PC-3 (cell line): ENCODE measurements at regions of chr11 and their contacts with region 1.

Region 1: GRCh38 chr11:65569973-65570918 is at the start of gene ZNRD2:
- DNase-seq: peak; percentile 99
- ATAC-seq: peak; percentile 67
- H3K4me3 ChIP-seq: peak within 1 kb of the TSS; percentile 97
- H3K27ac ChIP-seq: peak within 1 kb of the TSS; percentile 86
- H3K4me1 ChIP-seq: peaks cover 55% of the 10 kb centered on the region
- H3K27me3 ChIP-seq: no peaks in the 10 kb centered on the region
- CTCF ChIP-seq: peak; percentile 78
- total RNA-seq, gene ZNRD2: 126 and 206 TPM in 2 replicates

Region 2: GRCh38 chr11:65448418-65449105 is 121.7 kb before region 1 on chr11:
- CTCF ChIA-PET with region 1: no interaction called
- POLR2A ChIA-PET with region 1: no interaction called
- intact Hi-C with region 1: no loop called
- DNase-seq: peak; percentile 2
- ATAC-seq: no peak
- H3K4me3 ChIP-seq: no peak overlapping the region
- H3K27ac ChIP-seq: no peak overlapping the region
- H3K4me1 ChIP-seq: peaks cover 6% of the 10 kb centered on the region; the same call in 1 of the 2 replicates
- H3K27me3 ChIP-seq: no peaks in the 10 kb centered on the region
- CTCF ChIP-seq: no peak

Region 3: GRCh38 chr11:65540297-65541092 is 29.8 kb before region 1 on chr11:
- CTCF ChIA-PET with region 1: interaction called, 25 read pairs
- POLR2A ChIA-PET with region 1: interaction called, 7 read pairs
- intact Hi-C with region 1: loop called (anchors 1 kb)
- DNase-seq: peak; percentile 91
- ATAC-seq: peak; percentile 69
- H3K4me3 ChIP-seq: peak overlapping the region; percentile 81
- H3K27ac ChIP-seq: peak overlapping the region; percentile 69
- H3K4me1 ChIP-seq: peaks cover 19% of the 10 kb centered on the region
- H3K27me3 ChIP-seq: no peaks in the 10 kb centered on the region
- CTCF ChIP-seq: peak; percentile 92

Region 4: GRCh38 chr11:65546217-65546958 is 23.9 kb before region 1 on chr11:
- CTCF ChIA-PET with region 1: interaction called, 25 read pairs
- POLR2A ChIA-PET with region 1: interaction called, 7 read pairs
- intact Hi-C with region 1: no loop called
- DNase-seq: peak; percentile 94
- ATAC-seq: peak; percentile 74
- H3K4me3 ChIP-seq: peak overlapping the region; percentile 69
- H3K27ac ChIP-seq: peak overlapping the region; percentile 44
- H3K4me1 ChIP-seq: peaks cover 28% of the 10 kb centered on the region
- H3K27me3 ChIP-seq: no peaks in the 10 kb centered on the region
- CTCF ChIP-seq: no peak

Region 5: DNA sequence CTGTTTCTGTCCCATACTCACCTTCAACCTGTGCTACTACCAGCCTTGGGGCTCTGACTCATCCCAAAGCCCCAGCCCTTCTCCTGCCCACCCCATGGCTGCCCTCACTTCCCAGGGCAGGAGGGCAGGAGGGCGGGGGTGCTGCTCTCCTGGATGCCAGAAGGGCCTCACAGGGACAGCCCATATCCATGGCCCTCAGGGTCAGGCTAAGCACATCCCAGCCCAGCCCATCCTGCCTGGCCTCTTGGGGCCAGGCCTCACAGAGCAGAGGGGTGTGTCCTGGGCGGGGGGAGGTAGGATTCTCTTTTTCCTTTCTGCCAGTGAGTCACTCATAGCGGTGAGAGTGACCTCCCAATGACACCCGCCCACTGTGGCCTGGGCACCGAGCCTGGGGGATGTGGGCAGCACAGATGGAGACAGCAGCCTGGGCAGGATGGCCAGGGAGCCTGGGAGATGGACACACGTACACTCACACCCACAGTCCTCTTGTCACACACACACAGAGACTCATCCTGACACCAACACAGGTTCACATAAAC is 14.5 kb before region 1 on chr11:
- CTCF ChIA-PET with region 1: interaction called, 6 read pairs
- POLR2A ChIA-PET with region 1: interaction called, 10 read pairs
- intact Hi-C with region 1: loop called (anchors 1 kb)
- DNase-seq: peak; percentile 96
- ATAC-seq: peak; percentile 62
- H3K4me3 ChIP-seq: peak overlapping the region; percentile 68
- H3K27ac ChIP-seq: peak overlapping the region; percentile 80
- H3K4me1 ChIP-seq: peaks cover 64% of the 10 kb centered on the region
- H3K27me3 ChIP-seq: no peaks in the 10 kb centered on the region
- CTCF ChIP-seq: no peak

Region 6: GRCh38 chr11:65692367-65692766 is 122.1 kb after region 1 on chr11:
- CTCF ChIA-PET with region 1: no interaction called
- POLR2A ChIA-PET with region 1: interaction called, 12 read pairs
- intact Hi-C with region 1: no loop called
- DNase-seq: no peak
- ATAC-seq: no peak
- H3K4me3 ChIP-seq: no peak overlapping the region
- H3K27ac ChIP-seq: no peak overlapping the region
- H3K4me1 ChIP-seq: peaks cover 13% of the 10 kb centered on the region
- H3K27me3 ChIP-seq: no peaks in the 10 kb centered on the region
- CTCF ChIP-seq: no peak